ENCODE measurements at regions of chr20 and their contacts with region 1.

Region 1: DNA sequence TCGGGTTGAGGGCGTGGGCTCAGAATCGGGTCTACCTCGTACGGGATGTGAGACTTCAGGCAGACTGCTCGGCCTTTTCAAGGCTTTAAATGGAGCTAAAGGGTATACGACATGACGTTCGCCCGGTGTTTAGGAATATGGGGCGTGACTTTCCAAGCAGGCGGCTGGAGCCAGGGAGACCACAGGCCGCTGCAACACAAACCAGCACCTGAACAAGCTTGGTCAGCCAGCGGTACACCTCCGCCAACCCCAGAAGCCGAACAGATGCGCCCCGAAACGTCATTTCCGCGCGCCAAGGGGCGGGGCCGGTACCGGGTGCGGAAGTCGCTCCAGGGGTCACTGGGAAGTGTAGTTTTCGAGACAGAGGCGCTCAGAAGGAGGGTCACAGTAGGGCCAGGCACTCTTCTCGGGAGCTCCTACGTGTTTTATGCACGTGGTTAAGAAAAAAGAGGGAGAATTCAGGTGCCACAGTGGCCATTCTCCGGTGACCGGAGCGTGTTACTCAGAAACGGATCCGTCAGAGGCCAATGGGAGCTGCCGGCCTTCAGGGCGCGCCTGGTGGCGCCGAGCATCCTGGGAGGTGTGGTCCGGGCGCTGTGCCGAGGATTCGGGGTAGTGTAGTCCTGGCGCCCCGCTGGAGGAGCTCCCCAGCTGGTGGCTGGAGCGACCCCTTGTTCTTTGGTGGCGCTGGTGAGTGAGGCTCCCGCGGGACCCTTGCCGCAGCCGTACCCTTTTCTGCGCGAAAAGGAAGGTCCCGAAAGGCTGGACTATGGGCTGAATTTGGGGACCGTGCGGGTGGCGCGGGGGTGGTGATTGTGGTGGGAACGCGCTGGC is at the start of gene ZNF133:
- DNase-seq: peak; percentile 95 to 97
- H3K4me3 ChIP-seq: peak within 1 kb of the TSS; percentile 73 to 95
- H3K27ac ChIP-seq: peak within 1 kb of the TSS; percentile 81 to 95
- H3K4me1 ChIP-seq: peaks cover 0 to 21% (median 13%) of the 10 kb centered on the region in 4 donors
- H3K27me3 ChIP-seq: no peaks in the 10 kb centered on the region
- CTCF ChIP-seq: no peak

Region 2: DNA sequence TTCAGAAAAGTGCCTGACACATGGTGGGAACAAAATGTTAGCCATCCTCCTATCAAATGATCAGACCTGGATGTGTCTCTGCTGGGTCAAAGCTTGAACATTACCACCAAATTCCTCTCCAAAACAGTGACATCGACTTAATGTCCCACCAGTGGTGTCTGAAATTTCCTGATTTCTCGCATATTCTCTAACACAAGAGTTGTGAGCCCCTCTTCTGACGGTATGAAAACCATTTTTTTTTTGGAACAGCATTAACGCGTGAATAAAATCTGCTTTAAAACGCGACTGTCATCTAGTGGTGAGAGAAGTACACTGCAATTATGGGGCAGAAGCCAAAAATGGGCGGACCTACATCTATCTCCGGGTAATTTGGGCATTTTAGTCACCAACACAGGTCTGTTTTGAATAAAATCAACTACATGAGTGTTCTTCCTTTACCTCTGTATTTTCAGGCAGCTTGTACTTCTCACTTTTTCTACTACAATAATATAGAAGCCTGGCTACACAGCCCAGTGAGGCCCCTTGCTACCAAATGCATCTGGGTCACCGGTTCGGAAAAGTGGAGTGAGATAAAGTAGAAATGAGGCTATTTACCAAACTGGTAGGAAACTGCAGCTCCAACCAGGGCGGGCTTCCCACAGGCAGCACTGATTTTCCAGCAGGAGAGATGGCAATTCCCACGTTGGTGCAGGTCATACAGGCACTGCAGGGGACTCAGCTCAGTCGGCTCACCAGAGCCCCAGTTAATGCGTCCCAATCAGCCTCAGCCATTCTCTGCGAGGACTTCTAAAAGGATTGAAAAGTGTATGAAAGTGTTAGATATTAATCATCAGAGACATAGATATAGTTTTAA is 291.9 kb before region 1 on chr20:
- intact Hi-C with region 1: no loop called
- DNase-seq: no peak
- H3K4me3 ChIP-seq: no peak overlapping the region
- H3K27ac ChIP-seq: no peak overlapping the region
- H3K4me1 ChIP-seq: peaks cover 0 to 8% (median 2%) of the 10 kb centered on the region in 4 donors
- H3K27me3 ChIP-seq: no peaks in the 10 kb centered on the region
- CTCF ChIP-seq: peak; percentile 91 to 96

Region 3: DNA sequence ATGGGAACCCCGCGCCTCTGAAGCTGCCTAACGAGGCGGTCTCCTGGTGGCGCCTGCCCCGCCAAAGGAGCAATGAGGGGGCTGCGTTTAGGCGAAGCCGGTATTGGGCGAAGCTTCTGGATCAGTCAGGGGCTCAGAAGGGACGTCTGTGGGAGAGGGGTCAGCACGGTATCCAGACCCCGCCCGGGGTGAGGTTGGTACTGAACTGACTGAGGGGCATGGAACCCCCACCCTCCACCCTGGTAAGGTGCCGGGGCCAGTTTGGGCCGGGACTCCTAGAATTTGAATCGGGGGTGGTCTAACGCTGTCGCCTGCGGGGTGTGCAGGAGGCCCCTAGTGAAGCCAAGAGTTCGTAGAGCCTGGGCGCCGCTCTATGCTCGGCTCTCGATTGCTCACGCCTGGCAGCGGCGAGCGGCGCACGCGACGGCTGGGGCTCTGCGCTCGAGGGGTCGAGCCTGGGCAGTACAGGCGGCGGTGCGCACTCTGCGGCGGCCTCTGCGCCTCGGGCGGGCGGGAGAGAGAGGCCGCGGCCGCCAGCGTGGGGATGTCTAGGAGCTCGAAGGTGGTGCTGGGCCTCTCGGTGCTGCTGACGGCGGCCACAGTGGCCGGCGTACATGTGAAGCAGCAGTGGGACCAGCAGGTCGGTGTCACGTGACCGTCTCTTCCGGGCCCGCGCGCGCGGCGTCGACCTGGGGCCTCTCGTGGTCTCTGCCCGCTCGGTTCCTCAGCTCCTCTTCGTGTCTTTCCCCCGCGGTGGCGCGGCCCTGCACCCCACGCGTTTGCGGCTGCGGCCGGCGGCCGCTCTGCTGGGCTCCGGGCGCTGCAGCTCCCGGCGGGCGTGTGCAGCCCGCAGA is 150.5 kb before region 1 on chr20 and contains the starts of genes KAT14 and PET117:
- intact Hi-C with region 1: loop called (anchors 2 kb)
- DNase-seq: peak; percentile 85 to 93
- H3K4me3 ChIP-seq: peak within 1 kb of the TSS; percentile 70 to 95
- H3K27ac ChIP-seq: peak within 1 kb of the TSS; percentile 77 to 95
- H3K4me1 ChIP-seq: peaks cover 0 to 30% (median 21%) of the 10 kb centered on the region in 4 donors
- H3K27me3 ChIP-seq: no peaks in the 10 kb centered on the region
- CTCF ChIP-seq: no peak

Region 4: DNA sequence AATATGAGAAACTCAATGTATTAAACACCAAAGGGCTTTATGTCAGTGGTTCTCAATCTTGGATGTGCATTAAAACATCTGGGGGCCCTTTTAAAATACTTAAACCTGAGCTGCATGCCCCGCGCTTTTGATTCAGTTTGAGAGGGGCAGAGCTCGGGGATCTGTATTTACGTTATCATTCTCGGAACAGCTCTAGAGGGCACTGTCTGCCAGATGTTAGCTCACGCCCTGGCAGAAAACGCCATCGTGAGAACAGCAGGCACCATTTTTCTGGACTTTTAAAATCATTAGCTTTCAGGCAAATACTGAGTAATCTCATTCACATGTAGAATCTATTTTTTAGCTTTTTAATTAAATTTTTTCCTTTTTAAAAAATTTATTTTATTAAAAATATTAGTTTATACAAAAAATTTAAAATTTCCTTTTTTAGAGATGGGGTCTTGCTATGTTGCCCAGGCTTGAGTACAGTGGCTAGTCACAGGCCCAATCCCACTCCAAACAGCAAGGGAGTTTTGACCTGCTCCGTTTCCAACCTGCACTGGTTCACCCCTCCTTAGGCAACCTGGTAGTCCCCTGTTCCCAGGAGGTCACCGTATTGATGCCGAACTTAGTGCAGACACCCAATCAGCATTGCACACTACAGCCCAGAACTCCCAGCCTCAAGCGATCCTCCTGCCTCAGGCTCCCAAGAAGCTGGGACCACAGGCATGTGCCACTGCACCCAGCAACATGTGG is 29.8 kb before region 1 on chr20:
- intact Hi-C with region 1: no loop called
- DNase-seq: no peak
- H3K4me3 ChIP-seq: no peak overlapping the region
- H3K27ac ChIP-seq: no peak overlapping the region
- H3K4me1 ChIP-seq: no peaks in the 10 kb centered on the region
- H3K27me3 ChIP-seq: no peaks in the 10 kb centered on the region
- CTCF ChIP-seq: no peak

Region 5: DNA sequence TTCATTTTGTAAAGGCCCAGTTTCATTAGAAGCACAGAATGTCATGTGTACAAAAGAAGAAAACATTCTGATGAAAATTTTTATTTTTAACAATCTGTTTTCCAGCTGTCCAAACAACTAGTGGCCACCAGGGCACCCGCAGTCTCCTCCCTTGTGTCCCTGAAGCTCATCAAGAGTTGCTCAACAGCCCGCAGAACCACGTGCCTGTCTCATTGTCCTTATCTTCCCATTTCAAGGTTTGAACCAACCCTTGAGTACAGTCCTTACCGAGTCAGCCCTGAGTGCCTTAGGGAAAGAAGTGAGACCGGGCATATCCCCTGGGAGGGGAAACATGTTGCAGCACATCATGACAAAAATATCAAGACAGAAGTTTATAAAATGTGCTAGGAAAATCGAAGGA is 15.7 kb before region 1 on chr20:
- intact Hi-C with region 1: no loop called
- DNase-seq: peak in 1 of 2 donors; percentile 28
- H3K4me3 ChIP-seq: no peak overlapping the region
- H3K27ac ChIP-seq: no peak overlapping the region
- H3K4me1 ChIP-seq: no peaks in the 10 kb centered on the region
- H3K27me3 ChIP-seq: peaks cover 0 to 20% of the 10 kb centered on the region in 2 donors
- CTCF ChIP-seq: no peak